ENCODE measurements at regions of chr22 and their contacts with region 1.

Region 1: DNA sequence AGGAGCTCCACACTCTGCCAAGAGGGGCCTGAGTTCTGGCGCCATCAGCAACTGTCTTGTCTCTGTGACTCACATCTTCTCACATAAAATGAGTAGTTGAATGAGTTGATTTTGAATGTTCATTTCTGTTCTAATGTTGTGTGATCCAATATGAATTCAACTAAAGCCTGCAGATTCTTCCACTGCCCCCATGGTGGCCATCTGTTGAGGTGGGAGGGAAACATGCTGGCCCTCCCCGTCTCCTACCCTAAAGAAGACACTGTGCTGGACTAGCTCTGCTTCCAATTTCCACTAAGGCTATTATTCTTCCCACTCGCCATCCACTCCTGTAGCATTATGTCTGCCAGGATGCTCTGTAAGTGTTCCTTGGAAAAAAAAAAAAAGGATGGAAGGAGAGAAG is 555.6 kb upstream of the LARGE1 start:
- DNase-seq: no peak
- H3K4me3 ChIP-seq: no peak overlapping the region
- H3K27ac ChIP-seq: no peak overlapping the region
- H3K4me1 ChIP-seq: no peaks in the 10 kb centered on the region
- H3K27me3 ChIP-seq: no peaks in the 10 kb centered on the region
- CTCF ChIP-seq: no peak

Region 2: DNA sequence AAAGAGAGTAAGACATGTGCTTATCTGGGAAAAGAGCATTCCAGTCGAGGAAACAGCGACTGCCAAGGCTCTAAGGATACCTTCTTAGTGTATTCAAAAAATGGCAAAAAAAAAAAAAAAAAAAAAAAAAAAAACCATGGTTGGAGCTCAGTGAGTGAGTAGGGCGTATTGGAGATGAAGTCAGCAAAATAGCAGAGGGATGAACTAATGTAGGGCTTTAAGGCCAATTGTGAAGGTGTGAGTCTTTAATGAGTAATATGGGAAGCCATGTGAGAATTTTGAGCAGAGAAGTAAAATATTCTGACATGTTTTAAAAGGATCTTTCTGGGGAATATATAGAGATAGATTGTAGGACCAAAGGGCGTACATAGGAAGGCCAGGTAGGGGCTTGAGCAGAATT is 91.5 kb after region 1 on chr22:
- CTCF ChIA-PET with region 1: no interaction called
- POLR2A ChIA-PET with region 1: interaction called, 12 read pairs
- intact Hi-C with region 1: no loop called
- DNase-seq: no peak
- H3K4me3 ChIP-seq: no peak overlapping the region
- H3K27ac ChIP-seq: no peak overlapping the region
- H3K4me1 ChIP-seq: no peaks in the 10 kb centered on the region
- H3K27me3 ChIP-seq: no peaks in the 10 kb centered on the region
- CTCF ChIP-seq: no peak

Region 3: GRCh38 chr22:34620832-34621231 is 144.9 kb after region 1 on chr22:
- CTCF ChIA-PET with region 1: no interaction called
- POLR2A ChIA-PET with region 1: no interaction called
- intact Hi-C with region 1: no loop called
- DNase-seq: no peak
- H3K4me3 ChIP-seq: no peak overlapping the region
- H3K27ac ChIP-seq: no peak overlapping the region
- H3K4me1 ChIP-seq: no peaks in the 10 kb centered on the region
- H3K27me3 ChIP-seq: peaks cover 25% of the 10 kb centered on the region; the same call in 1 of the 2 replicates
- CTCF ChIP-seq: no peak

Region 4: DNA sequence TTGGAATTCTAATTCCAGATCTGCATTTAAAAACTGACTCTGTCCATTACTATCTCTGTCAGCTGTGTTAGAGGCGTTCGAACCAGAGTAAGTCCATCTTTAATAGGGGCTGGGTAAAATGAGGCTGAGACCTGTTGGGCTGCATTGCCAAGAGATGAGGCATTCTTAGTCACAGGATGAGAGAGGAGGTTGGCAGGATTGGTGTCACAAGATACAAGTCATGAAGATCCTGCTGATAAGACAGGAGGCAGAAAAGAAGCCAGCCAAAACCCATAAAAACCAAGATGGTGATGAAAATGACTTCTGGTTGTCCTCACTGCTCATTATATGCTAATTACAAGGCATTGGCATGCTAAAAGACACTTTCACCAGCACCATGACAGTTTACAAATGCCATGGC is 233.8 kb after region 1 on chr22:
- CTCF ChIA-PET with region 1: no interaction called
- POLR2A ChIA-PET with region 1: no interaction called
- intact Hi-C with region 1: no loop called
- DNase-seq: peak in 1 of 2 experiments; percentile 59
- H3K4me3 ChIP-seq: no peak overlapping the region
- H3K27ac ChIP-seq: no peak overlapping the region
- H3K4me1 ChIP-seq: no peaks in the 10 kb centered on the region
- H3K27me3 ChIP-seq: no peaks in the 10 kb centered on the region
- CTCF ChIP-seq: no peak

Measured in PC-9 (cell line).